Activated naive CD4-positive, alpha-beta T cell treated with anti-CD3 and anti-CD28 coated beads for 36 hours (primary cell): ENCODE measurements at regions of chr7 and their contacts with region 1.

Region 1: DNA sequence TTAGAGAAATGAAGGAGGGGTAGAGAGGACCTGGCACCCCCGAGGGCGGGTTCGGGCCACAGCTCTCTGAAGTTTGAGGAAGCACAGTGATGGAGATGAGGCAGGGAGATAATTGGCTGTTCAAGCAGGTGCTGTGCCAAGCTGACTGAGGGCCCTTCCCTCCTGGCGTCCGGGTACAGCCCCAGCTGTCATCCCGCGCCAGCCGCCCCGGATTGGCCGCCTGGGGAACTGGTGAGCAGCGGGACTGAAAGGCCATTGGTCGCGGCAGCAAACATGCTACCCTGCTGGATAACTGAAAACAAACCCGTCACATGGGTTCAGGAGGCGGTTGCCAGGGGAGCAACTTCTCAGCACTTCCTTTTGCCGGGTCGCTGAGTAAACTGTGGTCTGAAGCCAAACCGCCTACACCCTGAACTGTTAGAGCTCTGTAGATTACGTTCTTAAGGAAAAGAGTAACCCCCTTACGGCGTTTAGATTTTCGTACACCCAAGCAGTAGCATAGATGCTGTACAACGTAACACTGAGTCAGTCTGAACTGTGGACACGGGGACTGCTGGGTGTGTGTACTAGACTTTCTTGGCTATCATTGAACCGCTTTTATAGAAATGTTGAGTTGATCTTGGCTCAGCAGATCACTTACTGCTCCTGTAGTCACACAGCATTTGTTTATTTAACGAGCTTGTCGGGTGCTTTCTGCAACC is 1.3 kb downstream of the INSIG1 start:
- DNase-seq: peak; percentile 98
- H3K4me3 Mint-ChIP-seq: peak overlapping the region; percentile 88
- H3K27ac Mint-ChIP-seq: peak overlapping the region; percentile 92
- H3K4me1 Mint-ChIP-seq: peaks cover 30% of the 10 kb centered on the region
- H3K27me3 Mint-ChIP-seq: no peaks in the 10 kb centered on the region

Region 2: DNA sequence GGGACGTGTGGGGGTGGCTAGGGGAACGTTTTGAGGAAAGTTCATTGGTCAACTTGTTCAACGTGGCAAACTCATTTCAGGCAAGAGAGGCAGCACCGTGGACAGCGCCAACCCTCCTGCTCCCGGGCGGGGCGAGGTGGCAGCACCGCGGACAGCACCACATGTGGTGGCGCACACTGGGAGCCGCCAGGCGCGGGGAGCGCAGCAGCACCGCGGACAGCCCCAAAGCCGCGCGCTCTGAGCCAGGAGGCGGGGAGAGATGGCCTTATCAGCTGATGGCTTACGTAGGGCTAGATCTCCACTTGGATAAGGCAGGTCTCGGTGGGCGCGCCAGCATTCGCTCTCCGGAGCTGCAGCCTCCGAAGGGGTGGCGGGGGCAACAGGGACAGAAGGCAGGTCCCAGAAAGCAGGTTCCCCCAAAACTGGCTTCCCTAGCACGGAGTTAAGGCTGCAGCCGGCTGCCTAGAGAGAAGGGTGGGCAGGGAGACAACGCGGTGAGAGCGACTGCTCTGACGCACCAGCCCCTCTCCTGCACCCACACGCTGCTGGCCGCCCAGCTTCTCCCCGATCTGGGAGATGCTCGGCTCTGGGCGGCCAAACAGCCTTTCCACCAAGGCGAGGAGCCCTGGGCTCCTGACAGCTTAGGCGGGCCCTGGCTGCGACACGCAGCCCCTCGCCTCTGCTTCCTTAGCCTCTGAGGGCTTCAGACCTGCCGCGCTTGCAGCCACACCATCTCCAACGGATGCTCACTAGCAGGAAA is 228.8 kb before region 1 on chr7 and contains the start of gene HTR5A:
- CTCF ChIA-PET with region 1: no interaction called
- intact Hi-C with region 1: loop called (anchors 1 kb)
- DNase-seq: peak; percentile 92
- H3K4me3 Mint-ChIP-seq: no peak within 1 kb of the TSS
- H3K27ac Mint-ChIP-seq: no peak within 1 kb of the TSS
- H3K4me1 Mint-ChIP-seq: peaks cover 2% of the 10 kb centered on the region
- H3K27me3 Mint-ChIP-seq: peaks cover 52% of the 10 kb centered on the region
- total RNA-seq, gene HTR5A: not detected

Region 3: DNA sequence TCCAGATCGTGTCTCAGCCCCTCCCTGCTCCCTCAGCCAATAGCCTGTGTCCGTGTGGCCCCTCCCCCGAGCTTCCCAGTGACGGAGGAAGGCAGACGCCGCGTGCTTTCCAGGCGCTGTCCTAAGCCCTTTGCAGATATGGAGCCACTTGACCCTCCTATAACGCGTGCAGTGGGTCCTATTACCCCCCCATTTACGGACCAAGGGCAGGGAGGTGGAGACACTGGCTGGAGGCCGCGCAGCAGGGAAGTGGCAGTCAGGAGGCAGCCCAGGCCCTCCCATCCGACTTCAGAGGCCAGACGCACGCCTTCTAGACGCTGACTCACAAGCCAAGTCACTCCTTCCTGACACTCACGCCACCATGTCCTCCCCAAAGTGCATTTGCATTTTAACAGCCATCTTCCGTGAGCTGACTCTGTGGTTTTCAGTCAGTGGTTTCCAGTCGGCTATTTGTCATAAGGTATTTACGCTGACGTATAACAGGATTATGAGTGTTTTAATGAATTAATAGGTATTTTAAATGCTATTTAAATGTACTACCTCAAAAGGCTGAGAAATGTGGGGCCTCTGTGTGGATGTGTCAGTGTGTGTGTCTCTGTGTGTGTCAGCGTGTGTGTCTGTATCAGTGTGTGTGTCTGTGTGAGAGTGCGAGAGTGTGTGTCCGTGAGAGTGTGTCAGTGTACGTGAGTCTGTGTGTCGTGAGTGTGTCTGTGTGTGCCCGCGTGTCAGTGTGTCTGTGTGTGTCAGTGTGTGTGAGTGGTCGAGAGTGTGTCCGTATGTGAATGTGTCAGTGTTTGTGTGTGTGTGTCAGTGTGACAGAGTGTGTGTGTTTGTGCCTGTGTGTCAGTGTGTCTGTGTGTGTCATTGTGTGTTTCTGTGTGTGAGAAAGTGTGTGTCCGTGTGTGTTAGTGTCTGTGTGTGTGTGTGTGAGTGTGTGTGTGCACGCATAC is 93.3 kb before region 1 on chr7:
- CTCF ChIA-PET with region 1: interaction called, 3 read pairs
- intact Hi-C with region 1: loop called (anchors 1 kb)
- DNase-seq: peak; percentile 96
- H3K4me3 Mint-ChIP-seq: peak overlapping the region; percentile 69
- H3K27ac Mint-ChIP-seq: peak overlapping the region; percentile 92
- H3K4me1 Mint-ChIP-seq: peaks cover 35% of the 10 kb centered on the region
- H3K27me3 Mint-ChIP-seq: no peaks in the 10 kb centered on the region

Region 4: GRCh38 chr7:155338632-155339320 is 39.8 kb after region 1 on chr7:
- CTCF ChIA-PET with region 1: no interaction called
- intact Hi-C with region 1: loop called (anchors 1 kb)
- DNase-seq: peak; percentile 39
- H3K4me3 Mint-ChIP-seq: no peak overlapping the region
- H3K27ac Mint-ChIP-seq: no peak overlapping the region
- H3K4me1 Mint-ChIP-seq: peaks cover 12% of the 10 kb centered on the region
- H3K27me3 Mint-ChIP-seq: peaks cover 11% of the 10 kb centered on the region

Region 5: DNA sequence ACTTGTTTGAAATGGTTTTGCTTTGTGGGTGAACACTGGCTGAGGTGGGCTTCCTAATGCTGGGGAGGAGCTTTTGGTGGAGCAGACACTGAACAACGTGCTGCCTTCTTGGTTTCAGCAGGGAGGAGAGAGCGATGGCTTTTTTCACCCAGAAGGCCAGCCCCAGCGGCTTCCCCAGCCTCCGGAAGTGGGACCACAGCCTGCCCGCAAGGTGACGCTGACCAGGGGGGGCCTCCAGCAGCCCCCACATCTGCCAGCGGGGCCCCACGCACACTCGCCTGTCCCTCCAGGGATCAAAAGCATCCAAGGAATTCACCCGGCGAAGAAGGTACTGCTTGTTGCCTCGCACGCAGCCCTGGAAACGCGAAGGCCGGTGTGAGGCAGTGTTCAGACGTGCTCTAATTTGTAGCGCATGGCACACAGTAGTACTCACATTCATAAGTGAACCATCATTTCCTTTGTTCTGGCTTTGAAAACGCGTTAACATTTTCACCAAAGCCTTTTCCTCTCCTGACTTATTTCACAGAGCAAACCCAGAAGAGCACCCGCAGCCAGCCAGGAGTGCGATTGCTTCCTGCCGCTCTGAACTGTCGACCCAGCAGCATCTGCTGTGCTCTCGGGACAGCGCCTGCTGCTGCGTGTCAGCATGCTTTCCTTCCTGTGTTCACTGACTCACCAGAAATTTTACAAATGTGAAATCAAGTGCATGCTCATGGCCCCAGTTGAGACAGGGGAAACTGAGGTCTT is 464.9 kb after region 1 on chr7:
- CTCF ChIA-PET with region 1: no interaction called
- intact Hi-C with region 1: loop called (anchors 1 kb)
- DNase-seq: peak; percentile 82
- H3K4me3 Mint-ChIP-seq: peak overlapping the region; percentile 70
- H3K27ac Mint-ChIP-seq: peak overlapping the region; percentile 95
- H3K4me1 Mint-ChIP-seq: peaks cover 42% of the 10 kb centered on the region
- H3K27me3 Mint-ChIP-seq: no peaks in the 10 kb centered on the region